ENCODE measurements at regions of chr1 and their contacts with region 1.

Region 1: GRCh38 chr1:160997323-160998038 is 23.5 kb downstream of the F11R start:
- DNase-seq: peak; percentile 83
- ATAC-seq: peak; percentile 91 to 92

Region 2: GRCh38 chr1:160877221-160877620 is 120.3 kb before region 1 on chr1:
- intact Hi-C with region 1: no loop called
- DNase-seq: no peak
- ATAC-seq: no peak

Region 3: DNA sequence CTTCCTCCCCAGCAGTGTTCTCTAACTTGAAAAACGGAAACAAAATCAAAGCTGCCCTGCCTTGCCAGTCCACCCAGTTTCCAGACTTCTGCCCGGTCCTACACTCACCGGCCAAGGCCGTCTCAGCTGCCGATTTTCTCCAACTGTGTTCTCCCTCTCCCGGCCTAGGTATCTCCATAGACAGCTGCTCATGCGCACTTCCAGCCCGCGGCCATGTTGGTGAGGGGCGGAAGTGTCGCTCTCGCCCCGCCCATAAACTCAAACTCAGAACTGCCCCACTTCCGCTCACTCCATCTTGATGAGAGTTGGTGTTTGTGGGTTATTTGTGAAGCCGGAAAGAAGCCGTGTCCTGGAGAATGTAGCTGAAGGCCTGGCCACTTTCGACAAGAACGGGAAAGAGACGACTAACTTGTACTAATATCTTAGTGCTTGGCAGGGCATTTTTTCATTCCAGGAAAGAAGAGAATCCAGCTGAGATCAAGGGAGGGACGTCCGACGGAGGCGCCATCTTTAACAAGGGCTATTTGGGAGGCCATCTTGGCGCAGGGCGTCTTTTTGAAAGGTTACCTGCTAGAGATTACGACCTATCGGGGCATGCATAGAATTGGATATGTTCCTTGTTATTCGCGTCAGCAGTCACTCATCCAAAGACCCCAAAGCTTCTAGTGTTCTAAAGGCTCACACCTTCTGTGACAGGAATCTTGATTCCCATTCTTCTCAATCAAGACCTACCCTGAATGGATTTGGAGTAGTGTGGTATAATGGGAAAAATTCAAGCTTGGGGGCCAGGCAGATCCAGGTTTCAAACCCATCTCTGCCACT is 48.5 kb after region 1 on chr1 and contains the start of gene USF1:
- intact Hi-C with region 1: loop called in 1 of 2 experiments (anchors 10 kb)
- DNase-seq: peak; percentile 94
- ATAC-seq: peak; percentile 96 to 97
- total RNA-seq, gene USF1: 33.7 to 34.4 TPM

Region 4: GRCh38 chr1:161098210-161099068 is 101.0 kb after region 1 on chr1 and contains the start of gene KLHDC9:
- intact Hi-C with region 1: loop called (anchors 2 to 5 kb)
- DNase-seq: peak; percentile 82
- ATAC-seq: peak; percentile 66 to 84
- total RNA-seq, gene KLHDC9: 3.5 to 5.7 TPM

Region 5: GRCh38 chr1:161177112-161177935 is 179.8 kb after region 1 on chr1 and contains the start of gene B4GALT3:
- intact Hi-C with region 1: no loop called
- DNase-seq: peak; percentile 92
- ATAC-seq: peak; percentile 96 to 97
- total RNA-seq, gene B4GALT3: 19.7 to 25.2 TPM

Measured in left cardiac atrium (tissue), 4 donors.